Panc1 (cell line): ENCODE measurements at regions of chr11 and their contacts with region 1.

Region 1: GRCh38 chr11:66195867-66196266 is 72.6 kb upstream of the RAB1B start:
- DNase-seq: no peak
- ATAC-seq: no peak
- H3K4me3 ChIP-seq: no peak overlapping the region
- H3K27ac ChIP-seq: no peak overlapping the region
- H3K4me1 ChIP-seq: no peaks in the 10 kb centered on the region
- H3K27me3 ChIP-seq: no peaks in the 10 kb centered on the region
- CTCF ChIP-seq: no peak

Region 2: GRCh38 chr11:66136752-66137123 is 59.1 kb before region 1 on chr11:
- CTCF ChIA-PET with region 1: no interaction called
- POLR2A ChIA-PET with region 1: no interaction called
- in situ Hi-C with region 1: no loop called
- intact Hi-C with region 1: no loop called
- DNase-seq: no peak
- ATAC-seq: no peak
- H3K4me3 ChIP-seq: no peak overlapping the region
- H3K27ac ChIP-seq: no peak overlapping the region
- H3K4me1 ChIP-seq: peaks cover 10% of the 10 kb centered on the region; the same call in 1 of the 2 replicates
- H3K27me3 ChIP-seq: no peaks in the 10 kb centered on the region
- CTCF ChIP-seq: no peak

Region 3: DNA sequence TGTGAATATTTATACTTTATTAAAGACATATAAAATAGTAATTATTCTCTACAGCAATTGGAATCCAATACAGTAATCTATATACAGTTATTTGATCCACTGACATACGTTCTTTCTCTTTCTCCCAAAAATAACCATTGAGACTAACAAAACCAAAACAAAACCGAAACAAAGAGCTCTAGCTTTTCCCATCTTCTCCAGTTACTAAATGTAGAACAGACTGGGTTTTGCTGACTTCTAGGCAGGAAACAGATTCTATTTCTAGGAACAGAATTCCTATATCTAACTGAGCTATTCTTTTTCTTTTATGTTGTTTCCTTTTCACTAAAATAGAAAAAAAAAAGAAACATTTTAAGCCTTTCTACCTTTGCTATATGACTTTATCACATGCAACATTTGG is 45.7 kb before region 1 on chr11:
- CTCF ChIA-PET with region 1: no interaction called
- POLR2A ChIA-PET with region 1: no interaction called
- in situ Hi-C with region 1: no loop called
- intact Hi-C with region 1: no loop called
- DNase-seq: no peak
- ATAC-seq: no peak
- H3K4me3 ChIP-seq: no peak overlapping the region
- H3K27ac ChIP-seq: no peak overlapping the region
- H3K4me1 ChIP-seq: no peaks in the 10 kb centered on the region; the same call in 1 of the 2 replicates
- H3K27me3 ChIP-seq: no peaks in the 10 kb centered on the region
- CTCF ChIP-seq: no peak

Region 4: DNA sequence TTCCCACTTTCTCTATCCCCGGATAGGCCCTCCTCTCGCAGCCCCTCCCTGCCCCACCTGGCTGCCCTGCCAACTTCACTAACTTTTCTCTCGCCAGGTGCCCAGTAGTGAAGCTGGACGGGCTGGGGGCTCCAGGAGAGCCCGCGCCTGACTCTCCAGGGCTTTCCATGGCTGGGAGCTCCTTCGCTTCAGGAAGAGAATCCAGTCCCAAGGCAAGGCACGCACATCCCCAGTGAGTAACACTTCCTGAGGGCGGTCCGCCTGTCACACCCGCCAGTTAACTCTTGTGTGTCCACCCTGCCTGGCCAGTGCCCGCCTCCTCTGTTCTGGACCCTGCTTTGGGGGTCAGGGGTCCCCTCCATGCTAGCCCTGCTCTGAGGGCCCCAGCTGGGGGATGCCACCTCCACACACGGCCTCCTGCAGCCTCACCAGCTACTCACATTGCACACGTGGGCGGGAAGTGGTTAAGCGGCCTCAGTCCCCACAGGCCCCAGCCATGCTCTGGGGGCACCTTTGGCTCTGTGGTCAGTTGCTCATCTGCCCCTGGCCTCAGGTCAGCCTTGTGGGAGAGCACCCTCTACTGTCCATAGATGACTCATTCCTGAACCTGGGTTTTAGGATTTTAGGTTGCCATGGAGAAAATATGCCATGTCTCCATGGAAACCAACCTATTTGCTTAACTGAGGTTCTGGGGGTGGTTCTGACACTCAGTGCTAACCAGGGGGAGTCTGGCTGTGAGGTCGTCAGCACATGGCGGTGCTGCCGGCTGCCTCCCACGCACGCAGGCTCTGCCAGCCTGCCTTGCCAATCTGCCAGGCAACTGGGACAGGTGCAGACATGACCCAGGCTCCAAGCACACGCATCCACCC is 140.6 kb after region 1 on chr11 and contains the start of gene RIN1:
- CTCF ChIA-PET with region 1: interaction called, 10 read pairs
- POLR2A ChIA-PET with region 1: no interaction called
- in situ Hi-C with region 1: no loop called
- intact Hi-C with region 1: no loop called
- DNase-seq: peak; percentile 81
- ATAC-seq: peak; percentile 84
- H3K4me3 ChIP-seq: peak within 1 kb of the TSS; percentile 66 to 87
- H3K27ac ChIP-seq: peak within 1 kb of the TSS; percentile 89
- H3K4me1 ChIP-seq: peaks cover 41% of the 10 kb centered on the region
- H3K27me3 ChIP-seq: no peaks in the 10 kb centered on the region
- CTCF ChIP-seq: no peak; the same call in 1 of the 2 replicates
- total RNA-seq, gene RIN1: 21.7 TPM